ENCODE measurements at regions of chr11 and their contacts with region 1.

Region 1: DNA sequence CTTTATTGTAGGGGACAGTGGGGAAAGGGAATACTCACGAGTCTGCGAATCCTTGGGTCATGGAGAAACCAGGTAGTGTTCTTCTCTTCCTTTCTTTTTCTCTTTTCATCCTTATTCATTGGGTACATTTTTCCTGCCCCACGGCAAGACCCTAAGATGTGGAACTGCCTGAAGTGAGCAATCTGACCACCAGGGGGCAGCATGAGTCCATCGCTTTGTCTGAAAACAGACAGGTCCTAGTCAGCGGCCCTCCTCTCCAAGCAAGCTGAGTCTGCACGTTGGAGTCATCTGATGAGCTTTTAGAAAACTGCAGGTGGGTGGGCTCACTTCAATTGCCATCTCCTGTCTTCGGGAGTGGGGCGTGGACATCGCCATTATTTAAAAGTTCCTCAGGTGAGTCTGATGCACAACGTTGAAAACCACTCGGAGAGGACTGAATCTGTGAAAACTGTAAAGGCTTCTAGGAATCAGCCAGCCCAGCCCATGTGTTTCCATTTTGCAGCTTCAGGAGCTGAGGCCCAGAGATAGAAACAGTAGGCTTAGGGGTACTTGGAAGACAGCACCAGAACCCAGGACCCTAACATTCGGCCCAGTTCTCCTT is 34.0 kb upstream of the FBXO3 start:
- DNase-seq: peak; percentile 85
- ATAC-seq: peak; percentile 95
- H3K4me3 ChIP-seq: no peak overlapping the region
- H3K4me3 Mint-ChIP-seq: no peak overlapping the region
- H3K27ac ChIP-seq: no peak overlapping the region
- H3K27ac Mint-ChIP-seq: no peak overlapping the region
- H3K4me1 ChIP-seq: no peaks in the 10 kb centered on the region
- H3K4me1 Mint-ChIP-seq: no peaks in the 10 kb centered on the region
- H3K27me3 ChIP-seq: peaks cover 0 to 6% (median 1%) of the 10 kb centered on the region in 4 experiments
- H3K27me3 Mint-ChIP-seq: peaks cover 21% of the 10 kb centered on the region
- CTCF ChIP-seq: peak; percentile 95

Region 2: DNA sequence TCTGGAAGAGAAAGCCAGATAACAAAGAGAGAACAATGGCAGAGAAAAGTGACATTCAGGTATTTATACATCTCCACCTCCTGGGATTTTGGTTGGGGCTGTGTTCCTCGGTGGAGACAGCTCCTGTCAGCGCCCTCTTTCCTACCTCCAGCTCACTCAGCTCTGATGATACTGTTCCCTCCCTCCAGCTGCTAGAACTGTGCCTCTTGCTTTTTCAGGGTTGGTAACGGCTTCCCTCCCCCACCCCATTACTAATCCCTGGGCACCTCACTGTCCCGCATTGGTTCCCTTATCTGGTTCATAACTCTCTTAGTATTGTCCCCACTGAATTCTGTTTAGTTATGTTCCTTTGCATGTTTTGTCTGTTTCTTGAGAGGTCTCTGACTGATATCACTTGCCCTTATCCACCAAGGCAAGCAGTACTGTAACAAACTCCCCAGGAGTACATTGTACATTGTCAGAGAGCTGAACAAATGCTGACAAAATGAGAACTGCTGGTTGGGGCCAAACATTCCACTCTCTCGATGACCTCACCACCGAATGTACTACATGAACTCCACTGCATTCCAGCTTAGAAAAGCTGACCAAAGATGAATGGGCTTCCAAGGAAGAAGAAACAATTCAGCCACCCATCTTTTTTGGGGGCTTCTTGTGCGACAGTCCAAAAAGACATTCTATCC is 28.3 kb before region 1 on chr11:
- CTCF ChIA-PET with region 1: interaction called, 10 read pairs
- POLR2A ChIA-PET with region 1: no interaction called
- intact Hi-C with region 1: no loop called
- DNase-seq: no peak
- ATAC-seq: no peak
- H3K4me3 ChIP-seq: no peak overlapping the region
- H3K4me3 Mint-ChIP-seq: no peak overlapping the region
- H3K27ac ChIP-seq: no peak overlapping the region
- H3K27ac Mint-ChIP-seq: no peak overlapping the region
- H3K4me1 ChIP-seq: peaks cover 4 to 6% of the 10 kb centered on the region in 2 donors
- H3K4me1 Mint-ChIP-seq: peaks cover 9% of the 10 kb centered on the region
- H3K27me3 ChIP-seq: peaks cover 0 to 50% (median 20%) of the 10 kb centered on the region in 4 experiments
- H3K27me3 Mint-ChIP-seq: peaks cover 43% of the 10 kb centered on the region
- CTCF ChIP-seq: no peak

Region 3: DNA sequence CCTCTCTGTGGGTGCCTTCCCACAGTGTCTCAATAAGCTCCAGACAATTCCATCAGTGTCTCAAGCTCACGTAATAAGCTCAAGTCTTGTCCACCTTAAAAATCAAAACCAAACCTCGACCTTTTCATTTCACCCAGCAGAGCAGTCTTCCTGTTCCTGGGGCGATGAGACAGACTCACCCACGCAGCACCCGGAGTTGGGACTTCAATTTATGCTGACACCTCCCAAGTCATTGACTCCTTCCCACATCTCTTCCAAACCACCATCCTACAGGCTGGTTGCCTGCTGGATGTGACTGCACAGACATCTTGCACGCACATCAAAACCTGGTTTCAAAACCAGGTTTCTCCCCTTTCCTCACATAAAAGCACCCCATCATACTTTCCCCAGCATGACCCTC is 10.9 kb after region 1 on chr11:
- CTCF ChIA-PET with region 1: interaction called, 25 read pairs
- POLR2A ChIA-PET with region 1: no interaction called
- intact Hi-C with region 1: no loop called
- DNase-seq: no peak
- ATAC-seq: no peak
- H3K4me3 ChIP-seq: no peak overlapping the region
- H3K4me3 Mint-ChIP-seq: no peak overlapping the region
- H3K27ac ChIP-seq: no peak overlapping the region
- H3K27ac Mint-ChIP-seq: no peak overlapping the region
- H3K4me1 ChIP-seq: no peaks in the 10 kb centered on the region
- H3K4me1 Mint-ChIP-seq: peaks cover 3% of the 10 kb centered on the region
- H3K27me3 ChIP-seq: peaks cover 0 to 4% (median 0%) of the 10 kb centered on the region in 4 experiments
- H3K27me3 Mint-ChIP-seq: peaks cover 17% of the 10 kb centered on the region
- CTCF ChIP-seq: no peak

Region 4: DNA sequence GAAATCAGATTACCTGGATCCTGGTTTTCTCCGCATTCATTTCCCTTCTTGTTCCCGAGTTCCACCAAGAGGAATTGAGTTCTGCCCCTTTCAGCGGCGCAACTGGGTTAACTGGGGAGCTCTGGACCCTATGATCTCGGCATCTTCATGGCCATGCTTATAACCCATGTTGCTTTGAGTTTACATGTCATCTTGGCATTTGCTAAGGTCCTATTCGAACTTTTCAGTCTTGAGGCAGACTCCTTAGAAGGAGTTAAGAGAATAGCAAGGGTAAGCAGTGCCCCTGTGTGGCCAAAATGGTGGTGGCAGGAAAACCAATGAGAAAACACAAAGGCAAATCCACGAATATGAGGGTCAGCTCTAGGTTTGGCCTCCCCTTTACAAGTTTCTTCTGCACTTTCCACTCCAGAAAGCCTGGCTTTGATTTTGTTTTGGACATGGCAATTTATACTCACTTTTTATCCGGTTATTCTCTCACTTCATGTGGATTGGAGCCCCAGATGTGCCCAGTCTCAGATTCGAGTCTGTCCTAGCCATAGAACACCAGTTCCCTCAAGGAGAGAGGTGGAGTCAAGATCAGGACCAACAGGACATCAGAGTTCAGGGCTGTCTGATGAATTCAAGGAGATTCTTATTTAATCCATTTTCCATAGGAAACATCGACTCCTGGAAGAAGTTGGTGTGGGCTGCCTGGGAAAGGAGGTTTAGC is 21.3 kb after region 1 on chr11:
- CTCF ChIA-PET with region 1: interaction called, 123 read pairs
- POLR2A ChIA-PET with region 1: no interaction called
- intact Hi-C with region 1: loop called (anchors 1 kb)
- DNase-seq: peak; percentile 73
- ATAC-seq: peak; percentile 76
- H3K4me3 ChIP-seq: peak overlapping the region in 3 of 5 experiments; percentile 28 to 48 (median 32)
- H3K4me3 Mint-ChIP-seq: peak overlapping the region; percentile 86
- H3K27ac ChIP-seq: no peak overlapping the region
- H3K27ac Mint-ChIP-seq: no peak overlapping the region
- H3K4me1 ChIP-seq: peaks cover 10 to 14% of the 10 kb centered on the region in 2 donors
- H3K4me1 Mint-ChIP-seq: peaks cover 8% of the 10 kb centered on the region
- H3K27me3 ChIP-seq: peaks cover 0 to 39% (median 36%) of the 10 kb centered on the region in 4 experiments
- H3K27me3 Mint-ChIP-seq: peaks cover 49% of the 10 kb centered on the region
- CTCF ChIP-seq: peak; percentile 77

Region 5: GRCh38 chr11:33863418-33864172 is 55.3 kb after region 1 on chr11:
- CTCF ChIA-PET with region 1: interaction called, 10 read pairs
- POLR2A ChIA-PET with region 1: no interaction called
- intact Hi-C with region 1: no loop called
- DNase-seq: no peak
- ATAC-seq: no peak
- H3K4me3 ChIP-seq: no peak overlapping the region
- H3K4me3 Mint-ChIP-seq: no peak overlapping the region
- H3K27ac ChIP-seq: no peak overlapping the region
- H3K27ac Mint-ChIP-seq: no peak overlapping the region
- H3K4me1 ChIP-seq: peaks cover 14 to 18% of the 10 kb centered on the region in 2 donors
- H3K4me1 Mint-ChIP-seq: peaks cover 18% of the 10 kb centered on the region
- H3K27me3 ChIP-seq: no peaks in the 10 kb centered on the region
- H3K27me3 Mint-ChIP-seq: no peaks in the 10 kb centered on the region
- CTCF ChIP-seq: no peak

Region 6: DNA sequence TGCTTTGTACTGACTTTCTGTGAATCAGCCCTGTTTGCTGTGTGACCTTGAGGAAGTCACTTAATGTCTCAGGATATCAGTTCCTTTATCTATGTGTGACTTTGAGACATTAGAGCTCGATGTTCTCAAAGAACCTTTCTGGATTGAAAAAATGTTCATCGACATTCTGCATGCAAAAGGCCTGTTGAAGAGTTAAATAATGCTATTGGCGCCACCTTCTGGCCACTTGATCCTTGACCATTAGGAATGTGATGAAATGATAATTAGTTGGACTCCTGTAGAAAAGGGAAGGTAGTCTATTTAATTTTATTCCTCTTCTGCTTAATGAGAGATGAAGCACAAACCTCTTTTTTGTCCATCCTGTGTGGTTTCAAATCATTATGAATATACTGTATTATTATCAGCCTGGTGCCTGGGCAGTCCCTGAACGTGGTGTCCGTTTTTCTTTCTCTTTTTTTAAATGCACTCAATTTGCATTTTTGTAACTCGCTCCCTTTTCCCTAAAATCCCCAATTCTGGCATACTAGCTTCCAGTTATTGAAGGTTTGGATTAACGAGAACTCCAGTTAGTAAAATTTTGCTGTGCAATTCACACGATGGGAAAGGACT is 684.6 kb after region 1 on chr11:
- CTCF ChIA-PET with region 1: interaction called, 19 read pairs
- POLR2A ChIA-PET with region 1: no interaction called
- intact Hi-C with region 1: loop called (anchors 5 kb)
- DNase-seq: peak; percentile 64
- ATAC-seq: no peak
- H3K4me3 ChIP-seq: no peak overlapping the region
- H3K4me3 Mint-ChIP-seq: no peak overlapping the region
- H3K27ac ChIP-seq: no peak overlapping the region
- H3K27ac Mint-ChIP-seq: no peak overlapping the region
- H3K4me1 ChIP-seq: no peaks in the 10 kb centered on the region
- H3K4me1 Mint-ChIP-seq: no peaks in the 10 kb centered on the region
- H3K27me3 ChIP-seq: no peaks in the 10 kb centered on the region
- H3K27me3 Mint-ChIP-seq: peaks cover 2% of the 10 kb centered on the region
- CTCF ChIP-seq: peak; percentile 76

Measured in B cell (primary cell).